Mucosa of descending colon (tissue), 3 donors: ENCODE measurements at regions of chr15 and their contacts with region 1.

Region 1: GRCh38 chr15:31488426-31489204 is 162.0 kb downstream of the KLF13 start:
- DNase-seq: peak; percentile 72 to 85 (median 82)
- ATAC-seq: peak; percentile 89
- H3K4me3 ChIP-seq: no peak overlapping the region
- H3K4me1 ChIP-seq: peaks cover 29% of the 10 kb centered on the region
- CTCF ChIP-seq: peak; percentile 77

Region 2: GRCh38 chr15:31200735-31201151 is 287.9 kb before region 1 on chr15:
- intact Hi-C with region 1: loop called in 1 of 2 experiments (anchors 10 kb)
- DNase-seq: peak; percentile 65 to 88 (median 77)
- ATAC-seq: peak; percentile 77
- H3K4me3 ChIP-seq: no peak overlapping the region
- H3K4me1 ChIP-seq: no peaks in the 10 kb centered on the region
- CTCF ChIP-seq: no peak

Region 3: DNA sequence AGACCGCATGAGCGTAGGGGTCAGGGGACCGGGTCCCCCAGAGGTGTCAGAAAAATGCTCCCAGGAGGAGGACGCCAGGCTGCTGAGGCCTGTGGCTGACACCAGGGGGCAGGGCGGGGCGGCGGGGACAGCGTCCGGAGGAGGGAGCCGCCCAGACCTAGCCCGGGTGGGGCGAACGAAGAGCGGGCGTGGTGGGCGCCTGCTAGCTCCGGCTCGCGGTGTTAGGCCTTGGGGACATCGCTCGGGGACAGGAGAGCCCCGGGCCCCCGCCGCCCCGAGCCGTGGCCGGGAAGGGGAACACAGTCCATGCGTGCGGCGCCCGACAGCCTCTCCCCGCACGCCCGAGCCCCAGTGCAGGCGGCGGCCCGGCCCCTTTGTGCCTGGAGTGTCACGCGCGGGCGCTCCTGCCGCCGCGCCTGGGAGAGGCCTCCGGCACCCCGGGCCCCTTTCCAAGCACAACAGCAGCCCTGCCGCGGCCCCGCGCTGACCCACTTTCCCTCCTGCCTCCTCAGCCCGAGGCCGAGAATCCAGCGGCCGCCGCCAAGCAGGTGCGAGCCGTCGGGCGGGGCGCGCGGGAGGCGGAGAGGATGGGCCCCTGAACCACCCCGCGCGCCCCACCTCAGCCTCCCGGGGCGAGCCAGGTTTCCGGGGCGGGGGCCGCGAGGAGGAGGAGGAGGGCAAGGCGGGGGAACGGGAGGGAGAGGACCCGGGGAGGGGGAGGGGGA is 273.0 kb before region 1 on chr15:
- intact Hi-C with region 1: loop called in 1 of 2 experiments (anchors 10 kb)
- DNase-seq: peak; percentile 91 to 95 (median 94)
- ATAC-seq: peak; percentile 86
- H3K4me3 ChIP-seq: peak overlapping the region; percentile 14
- H3K4me1 ChIP-seq: peaks cover 24% of the 10 kb centered on the region
- CTCF ChIP-seq: peak; percentile 96

Region 4: DNA sequence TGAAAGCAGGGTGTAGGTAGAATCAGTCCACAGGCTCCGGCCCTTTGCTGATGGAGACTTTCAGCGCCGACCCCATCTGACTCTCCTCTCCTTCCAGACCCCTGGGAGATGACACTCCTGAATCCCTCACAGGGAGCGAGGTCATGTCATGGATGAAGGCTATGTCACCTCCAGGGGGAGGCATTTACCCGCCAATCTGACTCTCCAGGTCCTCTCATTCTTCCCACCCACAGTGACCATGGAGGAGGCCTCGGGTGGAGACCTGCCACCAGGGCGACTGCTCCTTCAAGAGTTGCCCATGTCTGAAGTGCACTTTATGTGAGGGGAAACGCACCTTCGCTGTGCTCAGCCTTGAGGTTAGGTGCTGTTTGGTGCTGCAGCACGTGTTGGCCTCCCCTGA is 49.3 kb before region 1 on chr15:
- intact Hi-C with region 1: loop called in 1 of 2 experiments (anchors 2 kb)
- DNase-seq: peak in 2 of 3 donors; percentile 69 to 83
- ATAC-seq: peak; percentile 20
- H3K4me3 ChIP-seq: no peak overlapping the region
- H3K4me1 ChIP-seq: peaks cover 16% of the 10 kb centered on the region
- CTCF ChIP-seq: no peak

Region 5: DNA sequence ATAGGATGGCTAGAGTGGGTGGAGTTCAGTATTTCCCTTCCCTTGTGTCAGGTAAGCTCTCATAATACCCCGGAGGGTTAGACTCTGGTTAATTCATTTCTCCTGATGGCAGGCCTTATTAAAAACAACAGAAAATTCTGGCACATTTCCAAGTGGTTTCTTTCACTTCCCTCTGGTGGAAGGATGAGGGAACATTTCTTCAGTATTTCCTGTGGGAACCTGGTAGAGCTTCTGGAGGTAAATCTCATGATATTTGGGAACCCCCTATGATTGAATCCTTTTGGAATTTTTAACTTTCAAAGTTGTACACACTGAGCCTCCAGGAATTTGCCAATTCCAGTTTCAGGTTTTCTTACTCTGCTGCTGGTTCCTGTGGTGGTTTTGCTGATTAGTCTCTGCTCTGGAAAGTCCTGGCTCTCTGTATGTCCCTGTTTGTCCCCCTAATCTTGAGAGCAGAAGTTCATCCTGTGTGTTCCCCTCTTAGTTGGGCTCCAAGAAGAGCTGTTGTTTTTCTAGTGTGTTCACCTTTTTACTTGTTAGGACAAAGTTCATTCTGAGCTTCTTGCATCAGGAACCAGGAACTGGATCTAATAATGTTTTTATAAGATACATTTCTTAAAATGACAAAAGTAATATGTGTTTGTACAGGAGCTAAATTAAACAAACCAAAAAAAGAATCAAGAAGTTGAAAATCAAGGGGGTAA is 553.8 kb after region 1 on chr15:
- intact Hi-C with region 1: no loop called
- DNase-seq: no peak
- ATAC-seq: peak; percentile 57
- H3K4me3 ChIP-seq: no peak overlapping the region
- H3K4me1 ChIP-seq: peaks cover 5% of the 10 kb centered on the region
- CTCF ChIP-seq: no peak